Adrenal gland (tissue), 19 donors: ENCODE measurements at regions of chr17 and their contacts with region 1.

Region 1: DNA sequence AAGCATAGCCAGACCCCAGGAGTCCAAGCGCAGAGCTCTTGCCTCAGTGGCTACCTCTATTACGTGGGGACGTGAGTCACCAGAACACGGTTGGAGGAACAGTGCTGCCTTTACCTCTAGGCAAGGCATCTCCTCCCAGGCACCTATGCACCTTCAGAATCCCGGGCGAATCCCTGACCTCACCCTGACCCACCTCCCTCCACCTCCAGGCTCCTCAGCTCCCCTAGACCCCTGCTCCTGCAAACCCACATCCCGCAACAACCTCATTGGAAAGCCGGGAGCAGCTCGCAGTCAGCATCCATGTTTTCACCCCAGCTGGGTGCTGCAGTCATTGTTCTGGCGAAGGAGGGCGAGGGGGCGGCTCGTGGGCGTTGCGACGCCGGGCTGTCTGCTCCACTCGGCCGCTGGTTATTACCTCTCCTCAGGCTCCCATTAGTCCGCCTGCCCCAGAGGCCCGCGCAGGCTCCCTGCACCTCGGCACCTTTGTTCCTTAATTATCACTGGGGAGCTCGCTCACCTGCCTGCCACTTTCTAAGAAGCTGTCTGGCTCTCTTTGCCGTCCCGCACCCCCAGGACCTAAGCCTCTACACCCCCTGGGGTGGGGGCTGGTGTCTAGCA is 24.6 kb upstream of the DLX4 start:
- DNase-seq: no peak
- H3K4me3 ChIP-seq: no peak overlapping the region
- H3K27ac ChIP-seq: no peak overlapping the region
- H3K4me1 ChIP-seq: peaks cover 0 to 7% of the 10 kb centered on the region in 2 donors
- H3K27me3 ChIP-seq: no peaks in the 10 kb centered on the region
- CTCF ChIP-seq: no peak
- POLR2A ChIP-seq: no peak

Region 2: GRCh38 chr17:48985436-48986245 is 958.7 kb before region 1 on chr17:
- intact Hi-C with region 1: loop called in 1 of 2 experiments (anchors 10 kb)
- DNase-seq: no peak
- H3K4me3 ChIP-seq: no peak overlapping the region
- H3K27ac ChIP-seq: no peak overlapping the region
- H3K4me1 ChIP-seq: no peaks in the 10 kb centered on the region
- H3K27me3 ChIP-seq: peaks cover 44% of the 10 kb centered on the region
- CTCF ChIP-seq: no peak
- POLR2A ChIP-seq: no peak

Region 3: DNA sequence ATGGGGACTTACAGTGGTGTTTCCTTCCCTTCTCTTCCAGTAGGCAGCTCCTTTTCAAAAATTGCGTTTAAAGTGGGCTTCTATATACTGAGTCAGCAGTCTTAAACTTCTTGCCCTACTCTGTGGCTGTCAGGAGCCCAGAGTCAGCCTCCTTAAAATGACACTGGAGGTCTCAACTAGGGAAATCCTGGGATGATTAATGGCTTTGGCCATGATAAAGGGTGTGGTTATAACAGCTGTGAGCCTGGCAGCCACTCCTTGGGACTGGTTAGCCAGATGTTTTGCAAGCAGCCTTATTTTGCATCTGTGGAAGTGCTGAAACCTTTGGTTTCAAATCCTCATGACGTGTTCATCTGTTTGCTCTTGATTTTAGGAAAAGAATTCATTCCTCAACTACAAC is 121.6 kb before region 1 on chr17:
- intact Hi-C with region 1: no loop called
- DNase-seq: no peak
- H3K4me3 ChIP-seq: no peak overlapping the region
- H3K27ac ChIP-seq: no peak overlapping the region
- H3K4me1 ChIP-seq: peaks cover 0 to 6% of the 10 kb centered on the region in 2 donors
- H3K27me3 ChIP-seq: no peaks in the 10 kb centered on the region
- CTCF ChIP-seq: no peak
- POLR2A ChIP-seq: no peak

Region 4: DNA sequence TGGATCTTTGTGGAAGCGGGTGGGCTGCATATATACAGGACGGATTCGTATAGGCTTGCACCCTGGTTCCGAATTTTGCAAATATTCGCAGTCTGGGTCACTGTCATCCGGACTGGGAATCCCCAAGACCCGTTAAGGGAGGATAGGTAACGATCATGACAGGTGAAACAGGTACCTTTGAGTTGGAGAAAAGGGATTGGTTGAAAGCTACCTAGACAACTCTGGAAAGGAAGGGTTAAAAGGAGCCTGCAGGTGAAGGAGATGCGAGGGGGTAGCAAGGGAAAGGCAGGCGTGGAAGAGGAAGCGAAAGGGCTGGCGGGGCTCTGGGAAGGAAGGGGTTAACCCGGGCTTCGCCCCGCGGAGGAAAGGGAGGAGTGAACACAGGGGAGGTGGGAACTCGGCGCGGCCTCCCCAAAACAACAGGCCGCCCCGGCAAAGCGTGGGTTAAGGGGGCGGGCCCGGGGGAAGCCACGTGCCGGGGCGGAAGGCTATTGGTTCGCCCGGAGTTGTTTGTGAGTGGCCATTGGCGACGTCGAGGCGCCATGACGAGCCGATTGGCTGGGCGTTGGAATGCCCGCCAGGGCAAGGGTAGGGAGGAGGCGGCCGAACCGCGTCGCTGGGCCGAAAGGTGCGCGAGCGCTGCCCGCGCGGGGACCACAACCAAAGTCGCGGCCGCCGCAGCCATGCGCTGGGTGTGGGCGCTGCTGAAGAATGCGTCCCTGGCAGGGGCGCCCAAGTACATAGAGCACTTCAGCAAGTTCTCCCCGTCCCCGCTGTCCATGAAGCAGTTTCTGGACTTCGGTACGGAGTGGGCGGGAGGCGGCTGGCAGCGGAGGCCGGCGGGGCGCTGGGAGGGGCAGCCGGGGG is 150.6 kb after region 1 on chr17 and contains the start of gene PDK2:
- intact Hi-C with region 1: no loop called
- DNase-seq: peak; percentile 96 to 99 (median 98)
- H3K4me3 ChIP-seq: peak within 1 kb of the TSS; percentile 87 to 97 (median 91)
- H3K27ac ChIP-seq: peak within 1 kb of the TSS; percentile 27 to 84 (median 81)
- H3K4me1 ChIP-seq: peaks cover 10 to 11% of the 10 kb centered on the region in 2 donors
- H3K27me3 ChIP-seq: no peaks in the 10 kb centered on the region
- CTCF ChIP-seq: peak in 1 of 6 experiments; percentile 9
- POLR2A ChIP-seq: peak; percentile 60 to 90
- total RNA-seq, gene PDK2: 28.4 to 225 (median 126) TPM